ENCODE measurements at regions of chr20 and their contacts with region 1.

Region 1: GRCh38 chr20:34268851-34269636 is 27.8 kb downstream of the ASIP start:
- DNase-seq: peak in 1 of 2 experiments; percentile 73
- H3K4me3 ChIP-seq: peak overlapping the region; percentile 7 to 58 (median 41)
- H3K27ac ChIP-seq: no peak overlapping the region
- H3K4me1 ChIP-seq: no peaks in the 10 kb centered on the region
- H3K27me3 ChIP-seq: 0 out of 7 replicates have a peak, but pooled peaks cover 0 to 2% (median 0%) of the 10 kb centered on the region in 4 experiments
- CTCF ChIP-seq: no peak
- EP300 ChIP-seq: no peak
- POLR2A ChIP-seq: no peak
- RAD21 ChIP-seq: no peak

Region 2: DNA sequence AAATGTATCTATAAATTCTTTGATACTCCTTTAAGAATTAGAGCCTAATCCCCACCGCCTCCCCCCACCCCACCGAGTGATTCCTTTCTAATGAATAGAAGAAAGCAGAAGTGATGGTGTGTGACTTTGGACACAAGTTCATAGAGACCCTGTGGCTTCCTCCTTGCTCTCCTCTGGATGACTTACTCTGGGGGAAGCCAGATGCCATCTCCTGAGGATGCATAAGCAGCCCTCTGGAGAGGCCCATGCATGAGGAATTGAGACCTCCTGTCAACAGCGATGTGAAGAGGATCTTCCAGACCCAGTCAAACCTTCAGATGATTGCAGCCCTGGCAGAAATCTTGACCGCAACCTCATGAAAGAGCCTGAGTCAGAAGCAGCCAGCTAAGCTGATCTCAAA is 13.0 kb after region 1 on chr20:
- CTCF ChIA-PET with region 1: interaction called, 3 read pairs
- POLR2A ChIA-PET with region 1: interaction called, 13 read pairs
- DNase-seq: no peak
- H3K4me3 ChIP-seq: no peak overlapping the region
- H3K27ac ChIP-seq: no peak overlapping the region
- H3K4me1 ChIP-seq: no peaks in the 10 kb centered on the region
- H3K27me3 ChIP-seq: no peaks in the 10 kb centered on the region
- CTCF ChIP-seq: no peak
- EP300 ChIP-seq: no peak
- POLR2A ChIP-seq: no peak
- RAD21 ChIP-seq: no peak

Region 3: DNA sequence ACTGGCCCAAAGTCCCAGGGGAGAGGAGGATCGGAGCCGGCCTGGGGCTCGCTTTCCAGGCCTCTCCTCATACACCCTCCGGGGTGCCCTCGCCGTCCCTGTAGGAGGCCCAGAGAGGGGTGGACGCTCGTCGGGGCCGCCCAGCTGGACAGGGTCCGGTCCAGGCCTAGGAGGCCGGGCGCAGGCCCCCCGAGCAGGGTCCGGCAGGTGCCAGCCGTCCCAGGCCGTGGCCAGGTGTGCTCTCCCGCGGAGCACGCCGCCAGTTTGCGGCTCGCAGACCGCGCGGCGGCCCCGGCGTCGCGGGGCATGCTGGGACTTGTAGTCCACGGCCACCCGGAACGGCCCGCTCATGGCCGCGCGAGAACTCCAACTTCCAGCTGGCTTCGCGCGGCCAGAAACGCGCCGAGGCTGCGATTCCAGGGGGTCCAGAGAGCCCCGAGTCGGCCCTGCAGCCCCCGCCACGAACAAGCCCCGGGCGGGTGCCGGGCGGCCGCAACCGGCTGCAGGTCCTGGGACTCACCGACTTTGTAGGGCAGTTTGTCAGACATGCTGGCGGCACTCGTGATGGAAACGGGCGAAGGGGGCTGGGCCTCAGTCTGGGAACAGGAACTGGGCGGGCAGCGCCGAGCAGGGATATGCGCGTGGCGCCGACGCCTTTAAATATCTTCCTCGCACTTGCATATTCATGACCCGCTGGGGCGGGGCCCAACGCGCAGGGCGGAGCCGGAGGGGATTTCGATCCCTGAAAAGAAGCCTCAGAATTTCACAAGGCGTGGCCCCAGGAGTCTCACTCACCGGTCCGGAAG is 33.9 kb after region 1 on chr20 and contains the start of gene AHCY:
- CTCF ChIA-PET with region 1: no interaction called
- POLR2A ChIA-PET with region 1: interaction called, 17 read pairs
- DNase-seq: peak; percentile 94 to 97
- H3K4me3 ChIP-seq: peak within 1 kb of the TSS; percentile 69 to 94 (median 86)
- H3K27ac ChIP-seq: peak within 1 kb of the TSS; percentile 92
- H3K4me1 ChIP-seq: peaks cover 3 to 9% (median 7%) of the 10 kb centered on the region in 4 experiments; a peak in 6 of 7 replicates
- H3K27me3 ChIP-seq: no peaks in the 10 kb centered on the region
- CTCF ChIP-seq: no peak
- EP300 ChIP-seq: no peak
- POLR2A ChIP-seq: peak; percentile 84 to 98
- RAD21 ChIP-seq: no peak
- total RNA-seq, gene AHCY: 404 and 414 TPM in 2 replicates

Measured in H1 (cell line).